Heart right ventricle (tissue), 16 donors: ENCODE measurements at regions of chr2 and their contacts with region 1.

Region 1: GRCh38 chr2:239401067-239401880 is 454 bp upstream of the HDAC4 start:
- DNase-seq: peak; percentile 99
- ATAC-seq: peak; percentile 95 to 99 (median 97)
- H3K4me3 ChIP-seq: peak overlapping the region; percentile 52 to 88 (median 73)
- H3K27ac ChIP-seq: peak overlapping the region; percentile 95 to 100 (median 100)
- H3K4me1 ChIP-seq: peaks cover 0 to 42% (median 28%) of the 10 kb centered on the region in 9 donors
- H3K27me3 ChIP-seq: no peaks in the 10 kb centered on the region
- CTCF ChIP-seq: no peak

Region 2: GRCh38 chr2:239143858-239144718 is 257.2 kb before region 1 on chr2:
- intact Hi-C with region 1: loop called in 1 of 10 experiments (anchors 10 kb)
- DNase-seq: no peak
- ATAC-seq: peak; percentile 19 to 69 (median 53)
- H3K4me3 ChIP-seq: no peak overlapping the region
- H3K27ac ChIP-seq: no peak overlapping the region
- H3K4me1 ChIP-seq: peaks cover 0 to 2% (median 0%) of the 10 kb centered on the region in 9 donors
- H3K27me3 ChIP-seq: no peaks in the 10 kb centered on the region
- CTCF ChIP-seq: peak; percentile 38 to 73 (median 68)

Region 3: GRCh38 chr2:239239607-239240413 is 161.5 kb before region 1 on chr2:
- intact Hi-C with region 1: loop called in 1 of 10 experiments (anchors 5 kb)
- DNase-seq: no peak
- ATAC-seq: peak; percentile 40 to 70 (median 68)
- H3K4me3 ChIP-seq: peak overlapping the region in 7 of 10 donors; percentile 8 to 26 (median 15)
- H3K27ac ChIP-seq: peak overlapping the region; percentile 42 to 81 (median 68)
- H3K4me1 ChIP-seq: peaks cover 10 to 93% (median 42%) of the 10 kb centered on the region in 9 donors
- H3K27me3 ChIP-seq: no peaks in the 10 kb centered on the region
- CTCF ChIP-seq: no peak

Region 4: GRCh38 chr2:239308661-239309397 is 92.4 kb before region 1 on chr2:
- intact Hi-C with region 1: loop called in 1 of 10 experiments (anchors 10 kb)
- DNase-seq: peak in 1 of 2 donors; percentile 48
- ATAC-seq: peak in 7 of 8 donors; percentile 11 to 66 (median 54)
- H3K4me3 ChIP-seq: peak overlapping the region; percentile 8 to 63 (median 48)
- H3K27ac ChIP-seq: peak overlapping the region; percentile 70 to 96 (median 89)
- H3K4me1 ChIP-seq: peaks cover 35 to 100% (median 92%) of the 10 kb centered on the region in 9 donors
- H3K27me3 ChIP-seq: no peaks in the 10 kb centered on the region
- CTCF ChIP-seq: peak in 2 of 9 donors; percentile 27 to 37

Region 5: DNA sequence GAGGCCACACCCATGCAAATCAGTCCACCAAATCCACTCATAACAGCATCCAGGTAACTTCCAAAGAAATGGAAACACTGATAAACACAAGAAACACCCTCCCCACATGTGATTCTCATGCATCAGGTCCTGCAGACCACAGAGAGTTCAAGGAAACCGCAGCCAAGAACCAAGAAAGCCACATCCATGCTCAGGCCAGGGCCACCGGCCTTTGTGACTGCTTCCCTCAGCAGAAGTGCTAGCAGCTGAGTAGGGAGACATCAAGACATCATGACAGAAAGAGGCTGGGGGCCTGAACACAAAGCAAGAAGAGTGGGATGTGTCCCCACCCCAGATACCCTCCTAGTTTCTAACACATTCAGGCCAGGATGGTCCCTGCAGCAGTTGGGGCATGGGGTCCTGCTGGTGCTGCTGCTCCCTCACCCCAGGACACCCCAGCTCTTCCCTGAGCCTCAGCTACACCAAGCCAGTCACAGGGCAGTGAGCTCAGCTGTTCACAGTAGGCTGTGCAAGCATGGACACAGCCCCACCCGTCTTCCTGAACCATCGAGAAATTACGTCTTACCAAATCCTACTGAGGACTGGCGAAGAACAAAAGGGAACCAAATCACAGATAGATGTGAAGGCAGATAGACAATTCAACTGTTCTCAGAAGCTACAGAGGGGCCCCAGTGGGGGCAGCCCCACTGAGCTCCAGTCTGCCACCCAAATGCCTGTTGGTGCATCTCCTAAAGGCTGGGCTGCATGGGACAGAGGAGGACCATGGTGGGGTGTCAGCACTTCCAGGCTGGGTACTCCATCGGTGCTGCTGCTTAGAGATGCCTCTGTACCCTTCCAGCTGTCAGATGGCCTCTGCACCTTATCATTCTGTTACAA is 61.3 kb before region 1 on chr2:
- intact Hi-C with region 1: loop called in 1 of 10 experiments (anchors 5 kb)
- DNase-seq: peak in 1 of 2 donors; percentile 2
- ATAC-seq: peak in 1 of 8 donors; percentile 20
- H3K4me3 ChIP-seq: no peak overlapping the region
- H3K27ac ChIP-seq: no peak overlapping the region
- H3K4me1 ChIP-seq: peaks cover 0 to 33% (median 23%) of the 10 kb centered on the region in 9 donors
- H3K27me3 ChIP-seq: no peaks in the 10 kb centered on the region
- CTCF ChIP-seq: no peak